GM12878 (cell line): ENCODE measurements at regions of chr20 and their contacts with region 1.

Region 1: GRCh38 chr20:32031007-32031958 is 20.8 kb upstream of the HCK start:
- DNase-seq: no peak
- ATAC-seq: peak; percentile 56
- H3K4me3 ChIP-seq: 0 out of 2 replicates have a peak overlapping the region, but pooled peaks have one; percentile 24
- H3K27ac ChIP-seq: no peak overlapping the region
- H3K4me1 ChIP-seq: peaks cover 28% of the 10 kb centered on the region
- H3K27me3 ChIP-seq: no peaks in the 10 kb centered on the region; a peak in 1 of 4 replicates
- CTCF ChIP-seq: peak; percentile 76 to 99 (median 96)
- EP300 ChIP-seq: no peak
- POLR2A ChIP-seq: no peak
- RAD21 ChIP-seq: peak; percentile 54

Region 2: GRCh38 chr20:31822421-31823330 is 208.6 kb before region 1 on chr20:
- CTCF ChIA-PET with region 1: interaction called, 45 read pairs
- POLR2A ChIA-PET with region 1: no interaction called
- RAD21 ChIA-PET with region 1: interaction called, 7 read pairs
- SMC1A ChIA-PET with region 1: interaction called, 6 read pairs
- in situ Hi-C with region 1: no loop called
- intact Hi-C with region 1: loop called (anchors 2 kb)
- DNase-seq: no peak
- ATAC-seq: peak; percentile 97
- H3K4me3 ChIP-seq: no peak overlapping the region
- H3K27ac ChIP-seq: no peak overlapping the region
- H3K4me1 ChIP-seq: no peaks in the 10 kb centered on the region
- H3K27me3 ChIP-seq: no peaks in the 10 kb centered on the region
- CTCF ChIP-seq: peak; percentile 96 to 98 (median 98); a peak in 5 of 6 replicates
- EP300 ChIP-seq: no peak
- POLR2A ChIP-seq: no peak
- RAD21 ChIP-seq: peak; percentile 86

Region 3: DNA sequence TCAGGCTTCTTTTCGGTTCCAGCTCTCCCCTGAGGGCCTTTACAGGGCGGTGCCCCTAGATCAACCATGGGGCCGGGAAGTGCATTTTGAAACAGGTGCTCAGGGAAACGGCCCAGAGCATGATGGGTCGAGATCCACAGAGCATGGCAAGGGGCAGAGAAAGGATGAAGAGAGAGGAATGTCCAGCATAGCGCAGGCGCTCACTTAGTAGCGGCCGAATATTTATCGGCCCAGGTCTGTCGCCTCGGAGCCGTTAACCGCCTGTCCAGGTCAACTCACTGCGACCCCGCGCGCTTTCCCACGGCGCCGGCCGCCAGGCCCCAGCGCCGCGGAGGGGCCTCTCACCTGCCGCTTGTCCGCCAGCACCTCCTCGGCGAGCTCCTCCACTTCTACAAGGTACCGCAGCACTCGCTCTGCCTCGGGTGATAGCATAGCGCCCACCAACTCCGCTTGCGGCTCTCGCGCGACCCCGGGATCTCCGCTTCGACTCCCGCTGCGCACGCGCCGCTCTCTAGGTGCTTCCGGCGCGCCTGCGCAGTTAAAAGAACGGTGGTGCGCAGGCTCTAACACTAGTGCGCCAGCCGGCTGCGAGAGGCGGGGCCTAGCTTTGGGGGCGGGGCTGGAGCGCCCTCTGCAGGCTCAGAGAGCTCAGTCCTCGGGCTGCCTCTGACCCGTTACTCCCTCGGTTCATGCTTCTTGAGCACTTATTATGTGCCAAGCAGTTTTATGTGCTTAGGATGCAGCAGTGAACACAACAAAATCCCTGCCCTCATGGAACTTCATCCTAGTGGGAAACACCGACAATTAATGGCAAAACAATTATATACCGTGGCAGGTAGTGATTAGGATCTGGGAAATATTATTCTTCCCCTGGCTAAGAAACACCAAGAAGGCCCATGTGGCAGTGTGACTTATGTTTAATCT is 79.5 kb before region 1 on chr20 and contains the start of gene PDRG1:
- CTCF ChIA-PET with region 1: interaction called, 17 read pairs
- POLR2A ChIA-PET with region 1: no interaction called
- RAD21 ChIA-PET with region 1: interaction called, 19 read pairs
- SMC1A ChIA-PET with region 1: interaction called, 22 read pairs
- in situ Hi-C with region 1: no loop called
- intact Hi-C with region 1: no loop called
- DNase-seq: peak; percentile 76
- ATAC-seq: peak; percentile 98
- H3K4me3 ChIP-seq: peak within 1 kb of the TSS; percentile 90
- H3K27ac ChIP-seq: peak within 1 kb of the TSS; percentile 55
- H3K4me1 ChIP-seq: peaks cover 6% of the 10 kb centered on the region
- H3K27me3 ChIP-seq: no peaks in the 10 kb centered on the region
- CTCF ChIP-seq: peak; percentile 96 to 99 (median 96); a peak in 5 of 6 replicates
- EP300 ChIP-seq: no peak
- POLR2A ChIP-seq: peak; percentile 95
- RAD21 ChIP-seq: peak; percentile 86
- polyA plus RNA-seq, gene PDRG1: 34.1 to 55.8 TPM

Region 4: DNA sequence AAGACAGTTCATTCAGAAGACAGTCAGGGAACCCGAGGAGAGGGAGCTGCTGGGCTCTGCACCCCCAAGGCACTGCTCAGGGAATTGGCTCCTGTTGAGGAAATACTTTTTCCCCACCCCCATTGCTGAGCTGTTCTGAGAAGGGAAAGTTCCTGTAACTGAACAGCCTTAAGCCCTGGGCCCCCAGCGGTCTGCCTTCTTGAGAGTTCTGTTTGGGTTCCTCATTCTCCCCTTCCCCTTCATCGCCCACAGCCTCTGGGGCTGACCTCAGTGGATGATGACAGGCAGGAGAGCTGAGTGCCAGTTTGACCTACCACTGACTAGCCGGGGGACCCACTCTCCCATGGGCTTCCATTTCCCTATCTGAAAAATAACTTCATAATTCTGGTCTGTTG is 31.5 kb after region 1 on chr20:
- CTCF ChIA-PET with region 1: interaction called, 106 read pairs
- POLR2A ChIA-PET with region 1: interaction called, 30 read pairs
- RAD21 ChIA-PET with region 1: interaction called, 215 read pairs
- SMC1A ChIA-PET with region 1: interaction called, 108 read pairs
- in situ Hi-C with region 1: no loop called
- intact Hi-C with region 1: loop called (anchors 2 kb)
- DNase-seq: peak; percentile 55
- ATAC-seq: peak; percentile 79
- H3K4me3 ChIP-seq: 0 out of 2 replicates have a peak overlapping the region, but pooled peaks have one; percentile 12
- H3K27ac ChIP-seq: peak overlapping the region; percentile 51
- H3K4me1 ChIP-seq: peaks cover 36% of the 10 kb centered on the region
- H3K27me3 ChIP-seq: no peaks in the 10 kb centered on the region
- CTCF ChIP-seq: no peak
- EP300 ChIP-seq: 0 out of 4 replicates have a peak, but pooled peaks of 1 of the 2 experiments have one; percentile 32
- POLR2A ChIP-seq: no peak
- RAD21 ChIP-seq: no peak

Region 5: DNA sequence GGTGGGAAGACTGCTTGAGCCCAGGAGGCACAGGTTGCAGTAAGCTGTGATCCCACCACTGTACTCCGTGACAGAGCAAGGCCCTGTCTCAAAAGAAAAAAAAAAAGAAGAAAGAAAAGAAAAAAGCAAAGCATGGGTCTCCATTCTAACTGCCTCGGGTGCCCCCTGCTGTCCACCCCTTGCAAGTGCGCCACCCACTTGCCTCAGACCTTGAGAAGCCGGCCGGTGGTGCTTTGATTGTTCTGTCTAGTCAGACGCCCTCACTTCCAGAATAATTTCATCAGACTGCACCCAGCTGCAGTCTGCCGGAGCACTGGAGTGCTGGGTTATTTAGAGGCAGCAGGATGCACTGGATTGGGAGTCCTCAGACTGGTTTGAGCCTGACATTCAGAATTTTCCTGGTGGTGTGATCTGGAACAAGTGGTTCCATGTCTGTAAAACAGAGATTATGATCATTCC is 60.6 kb after region 1 on chr20:
- CTCF ChIA-PET with region 1: interaction called, 298 read pairs
- POLR2A ChIA-PET with region 1: interaction called, 17 read pairs
- RAD21 ChIA-PET with region 1: interaction called, 220 read pairs
- SMC1A ChIA-PET with region 1: interaction called, 344 read pairs
- in situ Hi-C with region 1: loop called (anchors 5 kb)
- intact Hi-C with region 1: loop called (anchors 1 kb)
- DNase-seq: no peak
- ATAC-seq: peak; percentile 95
- H3K4me3 ChIP-seq: no peak overlapping the region
- H3K27ac ChIP-seq: no peak overlapping the region
- H3K4me1 ChIP-seq: peaks cover 8% of the 10 kb centered on the region
- H3K27me3 ChIP-seq: no peaks in the 10 kb centered on the region; a peak in 1 of 4 replicates
- CTCF ChIP-seq: peak; percentile 82 to 95 (median 94)
- EP300 ChIP-seq: no peak
- POLR2A ChIP-seq: no peak
- RAD21 ChIP-seq: peak; percentile 90

Region 6: DNA sequence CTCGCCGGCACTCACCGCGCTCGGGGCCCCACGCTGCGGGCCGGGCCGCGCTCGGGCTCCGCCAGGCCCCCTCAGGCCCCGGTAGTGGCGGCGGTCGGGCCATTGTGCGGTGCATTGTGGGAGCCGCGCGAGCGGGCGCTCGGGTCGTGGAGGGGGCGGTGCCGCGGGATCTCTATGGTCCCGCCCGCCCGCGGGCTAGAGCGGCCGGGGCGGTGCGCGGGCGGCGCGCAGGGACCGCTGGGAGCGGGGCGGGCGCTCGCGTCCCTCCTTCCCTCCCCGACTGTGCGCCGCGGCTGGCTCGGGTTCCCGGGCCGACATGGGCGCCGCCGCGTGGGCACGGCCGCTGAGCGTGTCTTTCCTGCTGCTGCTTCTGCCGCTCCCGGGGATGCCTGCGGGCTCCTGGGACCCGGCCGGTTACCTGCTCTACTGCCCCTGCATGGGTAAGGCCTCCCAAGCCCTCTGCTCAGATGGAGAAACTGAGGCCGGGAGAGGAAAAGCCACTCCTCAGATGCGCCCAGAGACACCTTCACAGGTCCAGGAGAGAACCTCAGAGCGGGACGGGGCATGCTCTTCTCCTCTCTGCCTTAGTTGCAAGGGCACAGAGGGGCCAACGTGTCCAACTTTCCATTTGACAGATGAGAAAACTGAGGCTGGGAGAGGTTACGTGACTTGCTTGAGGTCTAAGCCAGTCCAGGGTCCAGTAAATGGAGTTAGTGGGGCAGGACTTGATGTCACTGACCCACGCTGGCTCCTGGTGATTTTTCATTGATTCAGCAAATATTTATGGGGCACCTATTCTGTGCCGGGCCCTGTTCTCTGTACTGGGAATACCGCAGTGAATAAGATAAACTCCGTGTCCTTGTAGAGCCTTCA is 176.6 kb after region 1 on chr20 and contains the starts of genes PLAGL2 and POFUT1:
- CTCF ChIA-PET with region 1: interaction called, 5 read pairs
- POLR2A ChIA-PET with region 1: interaction called, 3 read pairs
- RAD21 ChIA-PET with region 1: interaction called, 4 read pairs
- SMC1A ChIA-PET with region 1: interaction called, 9 read pairs
- in situ Hi-C with region 1: no loop called
- intact Hi-C with region 1: loop called (anchors 5 kb)
- DNase-seq: peak; percentile 37
- ATAC-seq: peak; percentile 92
- H3K4me3 ChIP-seq: peak within 1 kb of the TSS; percentile 99
- H3K27ac ChIP-seq: peak within 1 kb of the TSS; percentile 84
- H3K4me1 ChIP-seq: peaks cover 20% of the 10 kb centered on the region
- H3K27me3 ChIP-seq: no peaks in the 10 kb centered on the region
- CTCF ChIP-seq: peak in 2 of 3 experiments; percentile 20 to 25; a peak in 2 of 6 replicates
- EP300 ChIP-seq: peak in 1 of 2 experiments; percentile 58; a peak in 2 of 4 replicates
- POLR2A ChIP-seq: peak; percentile 92
- RAD21 ChIP-seq: no peak
- polyA plus RNA-seq, gene PLAGL2: 4.4 to 7.3 TPM
- polyA plus RNA-seq, gene POFUT1: 2.6 to 3.9 TPM